Heart left ventricle (tissue), 16 donors: ENCODE measurements at regions of chr5 and their contacts with region 1.

Region 1: GRCh38 chr5:72366324-72366976 is 46.3 kb downstream of the PTCD2 start:
- DNase-seq: peak in 4 of 5 donors; percentile 68 to 78 (median 75)
- ATAC-seq: peak; percentile 78 to 92 (median 91)
- H3K4me3 ChIP-seq: no peak overlapping the region
- H3K27ac ChIP-seq: peak overlapping the region in 6 of 12 donors; percentile 15 to 43 (median 25)
- H3K4me1 ChIP-seq: peaks cover 0 to 44% (median 11%) of the 10 kb centered on the region in 12 donors
- H3K27me3 ChIP-seq: no peaks in the 10 kb centered on the region
- CTCF ChIP-seq: peak; percentile 65 to 89 (median 82)
- POLR2A ChIP-seq: no peak

Region 2: GRCh38 chr5:72280581-72281170 is 85.8 kb before region 1 on chr5:
- intact Hi-C with region 1: no loop called
- DNase-seq: no peak
- ATAC-seq: peak in 2 of 4 donors; percentile 34 to 60
- H3K4me3 ChIP-seq: no peak overlapping the region
- H3K27ac ChIP-seq: peak overlapping the region in 10 of 12 donors; percentile 22 to 80 (median 68)
- H3K4me1 ChIP-seq: peaks cover 0 to 40% (median 12%) of the 10 kb centered on the region in 12 donors
- H3K27me3 ChIP-seq: no peaks in the 10 kb centered on the region
- CTCF ChIP-seq: peak; percentile 27 to 55 (median 42)
- POLR2A ChIP-seq: no peak

Region 3: DNA sequence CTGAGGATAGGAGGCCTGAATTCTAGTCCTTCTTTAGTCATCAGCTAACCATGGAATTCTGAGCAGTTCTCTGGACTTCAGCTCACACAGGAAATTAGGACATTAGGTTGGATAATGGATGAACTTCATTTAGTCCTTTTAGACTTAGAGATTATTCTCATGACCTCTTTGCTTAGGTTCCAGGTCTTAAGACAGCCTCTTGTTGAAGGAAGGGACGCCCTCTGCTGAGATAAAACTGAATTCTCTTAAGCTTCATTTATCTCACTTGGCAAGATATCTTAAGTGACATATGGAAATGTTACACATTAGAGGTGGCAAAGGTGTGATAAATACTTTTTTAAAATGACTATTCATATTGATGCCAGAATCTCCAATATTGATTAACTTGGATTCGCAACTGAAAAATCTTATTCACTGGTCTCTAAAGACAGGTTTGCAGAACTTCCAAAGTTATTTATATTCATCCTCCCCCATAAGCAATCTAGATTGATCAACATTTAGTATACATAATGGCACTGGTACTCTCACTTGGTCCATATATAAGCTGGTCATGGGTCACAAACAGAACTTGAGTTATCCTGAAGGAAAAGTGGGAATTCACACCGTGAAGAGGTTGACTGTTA is 157.6 kb after region 1 on chr5:
- intact Hi-C with region 1: loop called (anchors 1 to 2 kb)
- DNase-seq: no peak
- ATAC-seq: peak in 3 of 4 donors; percentile 75 to 86 (median 76)
- H3K4me3 ChIP-seq: no peak overlapping the region
- H3K27ac ChIP-seq: peak overlapping the region in 3 of 12 donors; percentile 23 to 45 (median 26)
- H3K4me1 ChIP-seq: peaks cover 0 to 13% (median 3%) of the 10 kb centered on the region in 12 donors
- H3K27me3 ChIP-seq: no peaks in the 10 kb centered on the region
- CTCF ChIP-seq: peak; percentile 55 to 83 (median 72)
- POLR2A ChIP-seq: no peak

Region 4: GRCh38 chr5:72822944-72823343 is 456.5 kb after region 1 on chr5:
- intact Hi-C with region 1: loop called in 7 of 10 experiments (anchors 2 to 10 kb)
- DNase-seq: no peak
- ATAC-seq: no peak
- H3K4me3 ChIP-seq: no peak overlapping the region
- H3K27ac ChIP-seq: no peak overlapping the region
- H3K4me1 ChIP-seq: peaks cover 0 to 46% (median 28%) of the 10 kb centered on the region in 12 donors
- H3K27me3 ChIP-seq: no peaks in the 10 kb centered on the region
- CTCF ChIP-seq: no peak
- POLR2A ChIP-seq: no peak